PC-9 (cell line): ENCODE measurements at regions of chr3 and their contacts with region 1.

Region 1: DNA sequence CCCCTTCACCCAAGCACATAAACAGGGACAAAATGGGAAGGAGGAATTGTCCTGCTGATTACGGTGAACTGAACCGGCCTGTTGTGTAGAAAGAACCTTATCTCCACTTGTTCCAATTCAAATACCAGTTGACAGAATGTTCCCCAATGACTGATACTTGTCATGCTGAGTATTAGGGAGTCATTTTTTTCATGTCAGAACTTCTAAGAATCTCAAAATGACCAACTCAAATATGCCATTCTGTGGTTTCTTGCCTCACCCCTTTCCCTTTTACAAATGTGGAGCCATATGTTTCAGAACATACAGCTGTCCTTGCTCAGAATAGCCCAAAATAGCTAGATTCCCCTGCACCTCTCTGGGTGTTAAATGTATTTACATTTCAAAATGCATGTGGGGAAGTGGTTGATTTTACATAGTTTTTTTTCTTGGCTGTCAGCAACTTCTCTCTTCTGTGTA is 405.9 kb upstream of the TBL1XR1 start:
- DNase-seq: no peak
- H3K4me3 ChIP-seq: peak overlapping the region; percentile 9; the same call in 1 of the 2 replicates
- H3K27ac ChIP-seq: peak overlapping the region; percentile 89
- H3K4me1 ChIP-seq: peaks cover 61% of the 10 kb centered on the region
- H3K27me3 ChIP-seq: no peaks in the 10 kb centered on the region
- CTCF ChIP-seq: no peak

Region 2: GRCh38 chr3:177190756-177191681 is 412.2 kb before region 1 on chr3:
- CTCF ChIA-PET with region 1: no interaction called
- POLR2A ChIA-PET with region 1: interaction called, 10 read pairs
- intact Hi-C with region 1: loop called (anchors 2 kb)
- DNase-seq: no peak
- H3K4me3 ChIP-seq: no peak overlapping the region
- H3K27ac ChIP-seq: peak overlapping the region; percentile 31
- H3K4me1 ChIP-seq: peaks cover 32% of the 10 kb centered on the region
- H3K27me3 ChIP-seq: no peaks in the 10 kb centered on the region
- CTCF ChIP-seq: no peak

Region 3: GRCh38 chr3:177478170-177478860 is 124.9 kb before region 1 on chr3:
- CTCF ChIA-PET with region 1: no interaction called
- POLR2A ChIA-PET with region 1: interaction called, 11 read pairs
- intact Hi-C with region 1: loop called (anchors 1 kb)
- DNase-seq: peak; percentile 84 to 100
- H3K4me3 ChIP-seq: no peak overlapping the region
- H3K27ac ChIP-seq: peak overlapping the region; percentile 85
- H3K4me1 ChIP-seq: peaks cover 33% of the 10 kb centered on the region
- H3K27me3 ChIP-seq: no peaks in the 10 kb centered on the region
- CTCF ChIP-seq: no peak

Region 4: GRCh38 chr3:177615015-177615414 is 11.8 kb after region 1 on chr3:
- CTCF ChIA-PET with region 1: no interaction called
- POLR2A ChIA-PET with region 1: interaction called, 14 read pairs
- intact Hi-C with region 1: loop called (anchors 1 kb)
- DNase-seq: peak; percentile 84 to 96
- H3K4me3 ChIP-seq: no peak overlapping the region
- H3K27ac ChIP-seq: peak overlapping the region; percentile 62
- H3K4me1 ChIP-seq: peaks cover 87% of the 10 kb centered on the region
- H3K27me3 ChIP-seq: no peaks in the 10 kb centered on the region
- CTCF ChIP-seq: no peak

Region 5: GRCh38 chr3:177816667-177817208 is 213.6 kb after region 1 on chr3:
- CTCF ChIA-PET with region 1: no interaction called
- POLR2A ChIA-PET with region 1: no interaction called
- intact Hi-C with region 1: loop called (anchors 2 kb)
- DNase-seq: peak; percentile 75 to 97
- H3K4me3 ChIP-seq: 0 out of 2 replicates have a peak overlapping the region, but pooled peaks have one; percentile 1
- H3K27ac ChIP-seq: peak overlapping the region; percentile 76
- H3K4me1 ChIP-seq: peaks cover 40% of the 10 kb centered on the region
- H3K27me3 ChIP-seq: no peaks in the 10 kb centered on the region
- CTCF ChIP-seq: peak; percentile 46; the same call in 1 of the 2 replicates

Region 6: DNA sequence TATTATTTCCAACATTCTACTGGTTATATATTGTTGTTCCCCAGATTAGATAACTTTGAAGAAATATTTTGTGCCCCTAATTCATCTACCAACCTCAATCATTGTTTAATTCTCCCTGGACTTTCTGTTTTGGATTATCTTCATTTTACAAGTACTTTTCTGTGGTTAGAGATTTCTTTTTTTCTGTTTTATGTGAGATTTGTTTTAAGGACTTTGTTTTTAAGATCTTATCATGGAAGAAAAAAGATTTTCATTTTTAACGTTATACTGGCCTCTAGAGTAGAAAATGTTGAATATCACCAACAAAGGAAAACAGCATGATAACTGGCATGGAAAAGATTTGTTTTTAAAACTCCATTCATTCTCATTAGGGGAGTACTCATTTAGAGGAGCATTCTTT is 722.2 kb after region 1 on chr3:
- CTCF ChIA-PET with region 1: no interaction called
- POLR2A ChIA-PET with region 1: no interaction called
- intact Hi-C with region 1: loop called (anchors 1 kb)
- DNase-seq: no peak
- H3K4me3 ChIP-seq: no peak overlapping the region
- H3K27ac ChIP-seq: no peak overlapping the region
- H3K4me1 ChIP-seq: peaks cover 13% of the 10 kb centered on the region
- H3K27me3 ChIP-seq: no peaks in the 10 kb centered on the region
- CTCF ChIP-seq: peak; percentile 72